Esophagus squamous epithelium (tissue), 5 donors: ENCODE measurements at regions of chr1 and their contacts with region 1.

Region 1: DNA sequence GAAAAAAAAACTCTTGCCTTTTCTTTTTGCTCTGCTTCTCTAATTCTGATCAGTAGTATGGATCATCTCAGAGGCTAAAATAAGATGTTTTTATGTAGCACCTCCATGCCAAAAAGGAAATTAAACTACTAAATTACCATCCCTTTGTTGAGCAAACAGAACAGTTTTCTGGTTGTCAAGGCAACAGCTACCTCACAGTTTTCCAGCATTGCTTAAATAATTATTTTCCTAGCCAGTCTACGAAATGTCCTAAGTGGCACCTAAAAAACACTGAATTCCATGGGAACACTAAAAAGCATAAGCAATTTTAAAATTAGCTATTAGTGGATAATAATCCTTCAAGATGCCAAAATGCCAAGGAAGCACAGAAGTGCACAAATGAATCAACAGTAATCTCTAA is 61.7 kb downstream of the ARID4B start:
- DNase-seq: no peak
- H3K4me3 ChIP-seq: no peak overlapping the region
- H3K27ac ChIP-seq: no peak overlapping the region
- H3K4me1 ChIP-seq: peaks cover 0 to 45% (median 0%) of the 10 kb centered on the region in 3 donors
- H3K27me3 ChIP-seq: no peaks in the 10 kb centered on the region
- CTCF ChIP-seq: no peak
- POLR2A ChIP-seq: no peak

Region 2: DNA sequence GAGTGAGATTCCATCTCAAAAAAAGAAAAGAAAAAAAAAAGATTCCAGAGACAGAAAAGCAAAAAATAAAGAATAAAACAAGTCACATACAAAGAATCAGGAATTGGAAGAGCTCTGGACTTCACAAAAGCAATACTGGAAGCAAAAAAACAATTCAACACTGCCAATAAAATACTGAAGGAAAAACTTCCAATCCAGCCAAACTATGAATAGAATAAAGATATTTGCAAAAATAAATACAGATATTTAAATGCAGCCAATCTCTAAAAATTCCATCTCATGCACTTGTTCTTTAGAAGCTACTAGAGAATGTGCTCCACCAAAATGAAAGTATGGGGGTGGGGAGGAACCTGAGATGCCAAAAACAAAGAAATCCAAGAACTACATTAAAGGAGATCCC is 75.9 kb before region 1 on chr1:
- intact Hi-C with region 1: no loop called
- DNase-seq: no peak
- H3K4me3 ChIP-seq: no peak overlapping the region
- H3K27ac ChIP-seq: no peak overlapping the region
- H3K4me1 ChIP-seq: no peaks in the 10 kb centered on the region
- H3K27me3 ChIP-seq: no peaks in the 10 kb centered on the region
- CTCF ChIP-seq: no peak
- POLR2A ChIP-seq: no peak

Region 3: DNA sequence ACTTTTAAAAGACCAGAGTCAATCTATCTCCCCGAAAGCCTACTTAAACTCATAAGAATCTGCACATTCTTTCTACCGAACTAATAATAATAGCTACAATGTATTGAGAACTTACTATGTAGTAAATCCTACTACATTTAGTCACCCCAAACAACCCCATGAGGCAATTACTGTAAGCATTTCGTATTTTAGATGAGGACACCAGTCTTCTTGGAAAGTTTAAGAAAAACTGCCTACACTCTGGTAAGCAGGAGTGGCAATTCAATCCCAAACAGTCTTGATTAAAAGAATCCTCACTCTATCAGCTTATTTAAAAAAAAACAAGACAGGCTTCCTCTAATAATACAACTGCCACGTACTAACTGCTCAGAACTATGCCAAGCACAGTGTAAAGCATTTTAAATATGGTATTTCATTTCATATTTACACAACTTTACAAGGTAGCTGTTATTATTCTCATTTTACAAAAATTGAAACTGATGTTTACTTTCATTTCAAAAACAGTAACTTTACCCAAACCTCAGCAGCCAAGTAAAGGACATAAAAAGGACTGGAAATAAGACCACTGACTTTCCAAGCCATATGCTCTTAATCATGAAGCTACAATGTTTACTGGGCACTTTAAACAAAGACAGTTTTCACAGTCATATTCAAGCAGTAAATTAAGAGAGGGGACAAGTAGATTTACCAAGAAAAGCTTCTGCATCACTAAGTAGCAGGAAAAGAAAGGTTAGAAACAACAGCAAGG is 47.8 kb after region 1 on chr1:
- intact Hi-C with region 1: no loop called
- DNase-seq: no peak
- H3K4me3 ChIP-seq: peak overlapping the region in 1 of 4 donors; percentile 16
- H3K27ac ChIP-seq: peak overlapping the region in 3 of 4 donors; percentile 44 to 73 (median 59)
- H3K4me1 ChIP-seq: peaks cover 10 to 70% (median 28%) of the 10 kb centered on the region in 3 donors
- H3K27me3 ChIP-seq: no peaks in the 10 kb centered on the region
- CTCF ChIP-seq: no peak
- POLR2A ChIP-seq: no peak

Region 4: GRCh38 chr1:235328357-235329138 is 62.2 kb after region 1 on chr1 and contains the start of gene GGPS1:
- intact Hi-C with region 1: loop called (anchors 10 kb)
- DNase-seq: peak; percentile 93
- H3K4me3 ChIP-seq: peak within 1 kb of the TSS; percentile 77 to 94 (median 90)
- H3K27ac ChIP-seq: peak within 1 kb of the TSS; percentile 93 to 98 (median 96)
- H3K4me1 ChIP-seq: peaks cover 27 to 73% (median 48%) of the 10 kb centered on the region in 3 donors
- H3K27me3 ChIP-seq: no peaks in the 10 kb centered on the region
- CTCF ChIP-seq: peak in 2 of 6 experiments; percentile 16 to 33
- POLR2A ChIP-seq: peak in 3 of 4 donors; percentile 24 to 90 (median 65)
- total RNA-seq, gene GGPS1: 6.0 to 17.0 (median 14.1) TPM